ENCODE measurements at regions of chr5 and their contacts with region 1.

Region 1: GRCh38 chr5:80191991-80192398 is 63.9 kb downstream of the SERINC5 start:
- DNase-seq: peak in 32 of 35 experiments; percentile 19 to 65 (median 44)
- ATAC-seq: peak; percentile 78 to 85 (median 80)
- H3K4me3 ChIP-seq: peak overlapping the region; percentile 0 to 35
- H3K4me3 Mint-ChIP-seq: peak overlapping the region; percentile 55 to 84 (median 71)
- H3K27ac ChIP-seq: peak overlapping the region; percentile 85
- H3K27ac Mint-ChIP-seq: peak overlapping the region; percentile 96
- H3K4me1 ChIP-seq: peaks cover 79 to 89% of the 10 kb centered on the region in 2 experiments
- H3K4me1 Mint-ChIP-seq: peaks cover 86 to 98% (median 88%) of the 10 kb centered on the region in 3 donors
- H3K27me3 ChIP-seq: no peaks in the 10 kb centered on the region
- H3K27me3 Mint-ChIP-seq: no peaks in the 10 kb centered on the region

Region 2: DNA sequence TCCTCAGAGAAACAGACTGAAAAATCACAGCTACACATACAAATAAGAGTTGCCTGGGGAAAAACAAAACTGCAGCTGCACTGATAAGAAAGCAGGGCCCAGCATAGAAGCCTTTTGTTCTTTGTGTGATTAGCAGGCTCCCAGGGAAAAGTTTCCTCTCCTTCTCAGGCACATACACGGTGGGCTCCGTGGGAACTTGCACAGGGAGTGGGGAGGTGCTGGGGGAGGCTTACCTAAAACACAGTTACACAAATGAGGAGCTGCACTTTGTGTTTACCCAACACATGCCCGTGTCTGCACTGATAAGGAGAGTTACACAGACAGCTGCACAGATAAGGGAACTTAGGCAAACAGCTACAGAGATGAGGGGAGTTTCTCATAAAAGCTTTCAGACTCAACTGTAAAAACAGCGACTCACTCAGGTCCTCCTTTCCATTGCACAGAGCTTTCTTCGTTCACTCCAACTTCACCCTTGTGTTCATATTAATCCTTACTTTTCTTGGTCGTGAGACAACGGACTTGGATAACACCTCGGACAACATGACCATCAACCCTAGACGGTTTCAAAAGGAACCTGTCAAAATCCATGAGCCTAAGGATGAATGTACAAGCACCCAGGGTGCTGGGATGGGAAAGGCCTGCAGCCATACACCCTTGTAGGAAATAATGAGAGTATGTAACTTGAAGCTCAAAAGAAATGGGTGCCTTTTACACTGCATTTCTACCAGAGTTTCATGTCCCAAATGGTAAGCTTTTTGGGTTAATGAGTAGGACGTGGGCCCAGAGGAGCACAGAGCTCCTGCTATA is 13.0 kb after region 1 on chr5:
- CTCF ChIA-PET with region 1: interaction called, 10 to 12 read pairs
- POLR2A ChIA-PET with region 1: interaction called in 1 of 2 experiments, 4 read pairs
- DNase-seq: peak in 3 of 35 experiments; percentile 27 to 60 (median 33)
- ATAC-seq: peak; percentile 68 to 89 (median 80)
- H3K4me3 ChIP-seq: no peak overlapping the region
- H3K4me3 Mint-ChIP-seq: peak overlapping the region; percentile 13 to 56 (median 21)
- H3K27ac ChIP-seq: peak overlapping the region; percentile 12
- H3K27ac Mint-ChIP-seq: peak overlapping the region; percentile 78 to 89
- H3K4me1 ChIP-seq: peaks cover 44 to 68% of the 10 kb centered on the region in 2 experiments
- H3K4me1 Mint-ChIP-seq: peaks cover 87 to 90% (median 87%) of the 10 kb centered on the region in 3 donors
- H3K27me3 ChIP-seq: no peaks in the 10 kb centered on the region
- H3K27me3 Mint-ChIP-seq: no peaks in the 10 kb centered on the region

Region 3: GRCh38 chr5:80246001-80246758 is 54.2 kb after region 1 on chr5:
- CTCF ChIA-PET with region 1: interaction called in 1 of 2 experiments, 3 read pairs
- POLR2A ChIA-PET with region 1: interaction called in 1 of 2 experiments, 15 read pairs
- DNase-seq: peak in 1 of 35 experiments; percentile 29
- ATAC-seq: peak in 1 of 4 experiments; percentile 23
- H3K4me3 ChIP-seq: no peak overlapping the region
- H3K4me3 Mint-ChIP-seq: peak overlapping the region; percentile 26 to 66 (median 63)
- H3K27ac ChIP-seq: peak overlapping the region; percentile 9
- H3K27ac Mint-ChIP-seq: peak overlapping the region; percentile 77 to 86
- H3K4me1 ChIP-seq: peaks cover 33 to 59% of the 10 kb centered on the region in 2 experiments
- H3K4me1 Mint-ChIP-seq: peaks cover 67 to 79% (median 78%) of the 10 kb centered on the region in 3 donors
- H3K27me3 ChIP-seq: no peaks in the 10 kb centered on the region
- H3K27me3 Mint-ChIP-seq: no peaks in the 10 kb centered on the region

Region 4: DNA sequence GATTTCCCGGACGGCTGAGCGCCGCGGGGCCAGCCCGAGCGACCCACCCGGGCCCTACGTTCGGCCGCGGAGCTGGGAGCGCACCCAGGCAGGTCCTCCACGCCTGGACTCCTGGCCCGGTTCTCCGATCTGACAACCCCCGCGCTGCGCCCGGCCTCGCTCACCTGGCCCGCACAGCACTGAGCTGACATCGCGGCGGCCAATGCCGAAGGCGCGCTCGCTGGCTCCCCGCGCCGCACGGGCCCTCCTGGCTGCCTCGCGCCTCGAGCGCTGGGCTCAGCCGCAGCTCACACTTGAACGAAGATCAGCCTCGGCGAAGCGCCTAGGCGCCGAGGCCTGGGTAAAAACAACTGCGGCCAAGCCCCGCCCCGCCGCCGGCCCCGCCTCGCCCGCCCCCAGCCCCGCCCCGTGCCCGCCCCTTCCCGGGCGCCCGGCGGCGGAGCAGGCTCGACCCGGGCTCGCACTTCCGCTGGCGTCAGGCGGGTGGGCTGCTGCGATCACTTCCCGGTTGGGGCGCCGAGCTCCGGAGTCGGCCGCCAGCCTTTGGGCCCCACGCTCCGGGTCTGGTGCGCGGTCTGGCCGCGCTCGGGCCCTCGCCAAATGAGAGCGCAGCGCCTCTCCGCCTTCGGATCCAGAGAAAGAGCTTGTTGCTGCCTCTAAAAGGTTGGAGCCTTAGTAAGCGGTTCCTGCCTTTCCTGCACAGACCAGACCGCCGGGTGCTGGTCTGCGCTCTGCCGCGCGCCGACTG is 63.9 kb after region 1 on chr5 and contains the start of gene SERINC5:
- CTCF ChIA-PET with region 1: interaction called, 3 to 5 read pairs
- POLR2A ChIA-PET with region 1: interaction called, 6 to 11 read pairs
- DNase-seq: peak; percentile 64 to 87 (median 79)
- ATAC-seq: peak; percentile 81 to 88 (median 83)
- H3K4me3 ChIP-seq: peak within 1 kb of the TSS; percentile 97 to 98
- H3K4me3 Mint-ChIP-seq: peak within 1 kb of the TSS; percentile 95 to 97 (median 97)
- H3K27ac ChIP-seq: peak within 1 kb of the TSS; percentile 89
- H3K27ac Mint-ChIP-seq: peak within 1 kb of the TSS; percentile 96 to 97
- H3K4me1 ChIP-seq: peaks cover 30 to 54% of the 10 kb centered on the region in 2 experiments
- H3K4me1 Mint-ChIP-seq: peaks cover 45 to 55% (median 54%) of the 10 kb centered on the region in 3 donors
- H3K27me3 ChIP-seq: no peaks in the 10 kb centered on the region
- H3K27me3 Mint-ChIP-seq: no peaks in the 10 kb centered on the region
- total RNA-seq, gene SERINC5: 109 to 170 (median 112) TPM

Measured in T-cell (primary cell).